ENCODE measurements at regions of chr12 and their contacts with region 1.

Region 1: GRCh38 chr12:110826592-110827200 is 20.1 kb upstream of the CCDC63 start:
- DNase-seq: peak; percentile 10
- H3K4me3 ChIP-seq: peak overlapping the region; percentile 10; the same call in 1 of the 2 replicates
- H3K27me3 ChIP-seq: 0 out of 2 replicates have a peak, but pooled peaks cover 2% of the 10 kb centered on the region
- CTCF ChIP-seq: peak; percentile 85

Region 2: DNA sequence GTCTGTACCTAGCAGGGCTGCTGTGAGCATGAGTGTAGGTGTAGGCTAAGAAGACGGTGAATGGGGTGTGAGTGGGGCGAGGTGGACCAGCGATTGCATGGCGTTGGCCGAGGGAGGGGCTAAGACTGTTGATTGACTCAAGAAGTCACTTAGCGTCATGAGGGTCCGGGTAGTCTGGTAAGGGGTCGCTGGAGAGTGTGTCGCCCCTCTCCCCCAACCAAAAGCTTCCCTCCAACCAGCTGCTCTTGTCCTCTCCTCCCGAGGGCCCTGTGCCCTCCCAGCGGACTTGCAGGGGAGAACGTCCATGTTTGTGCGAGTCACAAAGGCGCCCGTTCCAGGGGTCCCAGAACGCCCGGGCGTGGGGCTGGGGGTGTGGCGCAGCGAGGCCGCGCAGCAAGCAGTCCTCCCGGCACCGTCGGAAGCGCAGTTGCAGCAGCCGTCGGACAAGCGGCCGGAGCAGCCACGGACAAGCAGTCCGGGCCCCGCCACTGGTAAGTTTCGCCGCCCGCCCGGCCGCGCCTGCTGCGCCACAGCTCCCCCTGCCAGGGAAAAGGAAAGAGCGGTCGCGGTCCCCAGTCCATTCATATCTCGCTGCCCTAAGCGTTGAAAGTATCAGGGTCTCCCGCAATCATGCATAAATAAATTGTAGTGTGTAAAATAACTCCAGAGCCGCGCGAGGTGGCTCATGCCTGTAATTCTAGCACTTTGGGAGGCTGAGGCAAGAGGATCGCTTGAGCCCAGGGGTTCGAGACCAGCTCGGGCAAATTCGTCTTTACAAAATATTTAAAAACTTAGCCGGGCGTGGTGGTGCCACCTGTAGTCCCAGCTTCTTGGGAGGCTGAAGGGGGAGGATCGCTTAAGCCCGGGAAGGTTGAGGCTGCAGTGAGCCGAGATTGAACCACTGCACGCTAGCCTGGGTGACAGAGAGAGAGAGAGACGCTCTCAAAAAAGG is 20.2 kb after region 1 on chr12 and contains the start of gene CCDC63:
- CTCF ChIA-PET with region 1: interaction called, 10 read pairs
- POLR2A ChIA-PET with region 1: no interaction called
- DNase-seq: no peak
- H3K4me3 ChIP-seq: peak within 1 kb of the TSS; percentile 20; the same call in 1 of the 2 replicates
- H3K27me3 ChIP-seq: peaks cover 3% of the 10 kb centered on the region
- CTCF ChIP-seq: peak; percentile 54
- polyA plus RNA-seq, gene CCDC63: not detected in 2 replicates